Calu3 (cell line): ENCODE measurements at regions of chr17 and their contacts with region 1.

Region 1: GRCh38 chr17:77887464-77888241 is 70.8 kb upstream of the TNRC6C start:
- DNase-seq: peak; percentile 47
- H3K4me3 Mint-ChIP-seq: peak overlapping the region; percentile 75
- H3K27ac Mint-ChIP-seq: peak overlapping the region; percentile 64
- H3K4me1 Mint-ChIP-seq: peaks cover 23% of the 10 kb centered on the region
- H3K27me3 Mint-ChIP-seq: peaks cover 96% of the 10 kb centered on the region
- CTCF ChIP-seq: no peak

Region 2: DNA sequence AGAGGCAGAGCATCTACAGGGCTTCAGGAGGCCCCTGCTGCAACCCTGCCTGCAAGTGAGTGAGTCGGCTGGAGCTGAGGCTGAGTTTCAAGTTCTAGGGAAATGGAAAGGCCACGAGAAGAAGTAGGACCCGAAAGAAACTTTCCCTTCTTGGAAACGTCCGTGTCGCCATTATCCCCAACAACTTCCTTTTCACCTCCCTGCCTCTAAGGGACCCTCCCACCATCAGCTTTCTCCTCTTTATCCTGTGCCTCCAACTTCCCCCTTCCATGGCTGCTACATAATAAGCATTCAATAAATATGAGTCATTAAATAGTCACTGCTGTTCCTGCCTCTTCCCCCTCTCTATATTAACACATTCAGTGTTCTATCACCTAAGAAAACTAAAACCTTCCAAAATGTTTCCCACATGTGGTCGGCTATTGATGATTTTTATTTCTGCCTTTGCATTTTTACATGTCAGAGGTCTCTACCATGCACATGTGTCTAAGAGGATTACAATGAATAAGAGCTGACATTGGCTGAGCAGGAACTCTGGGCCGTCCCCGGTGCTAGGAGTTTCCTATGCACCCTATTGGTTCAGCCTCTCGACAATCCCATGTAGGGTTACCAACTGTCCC is 45.0 kb before region 1 on chr17:
- CTCF ChIA-PET with region 1: no interaction called
- intact Hi-C with region 1: loop called (anchors 5 kb)
- DNase-seq: peak; percentile 39
- H3K4me3 Mint-ChIP-seq: peak overlapping the region; percentile 42
- H3K27ac Mint-ChIP-seq: peak overlapping the region; percentile 63
- H3K4me1 Mint-ChIP-seq: peaks cover 48% of the 10 kb centered on the region
- H3K27me3 Mint-ChIP-seq: no peaks in the 10 kb centered on the region
- CTCF ChIP-seq: no peak